Activated T-helper 1 cell treated with anti-CD3 and anti-CD28 coated beads, Interleukin-12 subunit alpha, Interleukin-12 subunit beta, Interleukin-2, Interleukin-4 antibody, amounts not matched to agents 30 ng/mL and 10 ng/mL and 1 ng/mL, durations not matched to agents 14 hours and 24 hours and 36 hours (primary cell): ENCODE measurements at regions of chr19 and their contacts with region 1.

Region 1: DNA sequence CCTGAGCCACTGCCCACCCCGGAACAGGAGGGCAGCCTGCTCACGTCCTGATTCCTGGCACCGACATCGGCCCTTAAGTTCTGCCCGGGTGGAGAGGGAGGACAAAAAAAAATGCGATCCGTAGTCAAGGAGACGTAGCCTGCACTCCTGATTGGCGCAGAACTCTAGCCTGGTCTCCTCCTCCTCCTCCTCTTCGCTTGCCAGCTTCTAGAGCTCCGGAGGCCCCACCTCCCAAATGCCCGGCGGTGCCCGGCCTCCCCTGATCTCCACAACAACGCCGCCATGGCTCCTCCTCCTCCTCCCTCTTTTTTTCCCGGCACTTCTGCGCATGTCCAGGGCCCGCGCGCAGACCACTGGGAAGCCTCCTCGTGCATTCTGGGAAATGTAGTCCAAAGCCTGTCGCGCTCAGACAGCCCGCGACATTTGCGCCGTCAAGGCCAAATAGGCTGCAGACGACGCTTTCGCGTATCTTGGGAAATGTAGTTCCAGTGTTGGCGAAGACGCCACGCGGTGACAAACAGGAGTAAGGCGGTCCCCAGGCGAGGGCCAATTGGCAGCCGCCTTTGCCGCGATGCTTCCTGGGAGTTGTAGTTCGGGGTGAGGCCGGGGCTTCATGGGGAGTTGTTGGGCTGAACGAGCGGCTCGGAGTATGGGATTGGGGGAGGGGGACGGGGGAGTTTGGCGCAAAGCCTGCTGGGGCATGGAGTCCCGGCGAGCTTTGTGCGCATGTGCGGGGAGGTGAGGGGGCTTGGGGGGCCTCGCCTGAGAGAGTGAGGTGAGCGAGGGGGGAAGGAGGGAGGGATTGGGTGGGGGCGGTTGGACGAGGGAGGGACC is at the start of gene ZNF444:
- DNase-seq: peak; percentile 99
- H3K4me3 Mint-ChIP-seq: peak within 1 kb of the TSS; percentile 82
- H3K27ac Mint-ChIP-seq: peak within 1 kb of the TSS; percentile 84
- H3K4me1 Mint-ChIP-seq: peaks cover 37% of the 10 kb centered on the region
- H3K27me3 Mint-ChIP-seq: no peaks in the 10 kb centered on the region
- total RNA-seq, gene ZNF444: 33.8 and 36.5 TPM in 2 replicates

Region 2: GRCh38 chr19:55062734-55063492 is 1077.9 kb before region 1 on chr19 and contains the start of gene RDH13:
- intact Hi-C with region 1: loop called (anchors 5 kb)
- DNase-seq: peak; percentile 96
- H3K4me3 Mint-ChIP-seq: peak within 1 kb of the TSS; percentile 89
- H3K27ac Mint-ChIP-seq: peak within 1 kb of the TSS; percentile 75
- H3K4me1 Mint-ChIP-seq: peaks cover 12% of the 10 kb centered on the region
- H3K27me3 Mint-ChIP-seq: peaks cover 18% of the 10 kb centered on the region
- total RNA-seq, gene RDH13: 21.7 and 26.4 TPM in 2 replicates

Region 3: GRCh38 chr19:55605207-55605636 is 535.6 kb before region 1 on chr19:
- intact Hi-C with region 1: loop called (anchors 1 kb)
- DNase-seq: peak; percentile 98
- H3K4me3 Mint-ChIP-seq: peak overlapping the region; percentile 86
- H3K27ac Mint-ChIP-seq: peak overlapping the region; percentile 95
- H3K4me1 Mint-ChIP-seq: peaks cover 45% of the 10 kb centered on the region
- H3K27me3 Mint-ChIP-seq: no peaks in the 10 kb centered on the region

Region 4: GRCh38 chr19:55674841-55675660 is 465.7 kb before region 1 on chr19 and contains the start of gene EPN1:
- intact Hi-C with region 1: loop called (anchors 1 kb)
- DNase-seq: peak; percentile 94
- H3K4me3 Mint-ChIP-seq: peak within 1 kb of the TSS; percentile 98
- H3K27ac Mint-ChIP-seq: peak within 1 kb of the TSS; percentile 95
- H3K4me1 Mint-ChIP-seq: peaks cover 47% of the 10 kb centered on the region
- H3K27me3 Mint-ChIP-seq: no peaks in the 10 kb centered on the region
- total RNA-seq, gene EPN1: 46.0 and 48.3 TPM in 2 replicates

Region 5: DNA sequence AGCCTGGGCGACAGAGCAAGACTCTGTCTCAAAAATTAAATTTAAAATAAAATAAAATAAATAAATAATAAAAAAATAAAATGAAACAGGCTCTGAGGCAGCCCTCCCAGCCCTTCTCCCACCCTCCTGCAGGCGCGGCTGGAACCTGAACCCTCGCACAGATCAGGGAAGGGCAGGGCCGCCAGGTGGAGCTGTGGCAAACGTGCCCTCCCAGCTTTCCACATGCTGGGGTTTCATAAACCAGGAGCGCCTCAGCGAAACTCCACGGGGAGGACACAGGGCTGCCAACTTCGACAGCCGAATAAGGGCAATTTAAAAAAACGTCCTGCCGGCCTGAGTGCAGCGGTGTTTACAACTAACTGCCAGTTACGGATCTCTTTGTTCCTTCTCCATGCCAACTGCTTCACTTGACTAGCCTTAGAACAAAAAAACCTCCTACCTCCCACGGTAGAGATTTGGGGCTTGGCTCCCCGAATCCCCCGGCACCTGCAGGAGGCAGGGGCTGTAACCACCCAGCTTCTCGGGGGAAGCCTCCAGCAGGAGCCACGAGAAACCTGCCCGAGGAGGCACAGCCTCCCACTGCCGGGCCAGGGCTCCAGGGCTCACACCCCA is 35.6 kb before region 1 on chr19:
- intact Hi-C with region 1: loop called (anchors 1 kb)
- DNase-seq: peak; percentile 28
- H3K4me3 Mint-ChIP-seq: no peak overlapping the region
- H3K27ac Mint-ChIP-seq: no peak overlapping the region
- H3K4me1 Mint-ChIP-seq: peaks cover 6% of the 10 kb centered on the region
- H3K27me3 Mint-ChIP-seq: no peaks in the 10 kb centered on the region

Region 6: GRCh38 chr19:56121180-56122167 is 19.3 kb before region 1 on chr19 and contains the start of gene ZNF787:
- intact Hi-C with region 1: loop called (anchors 1 kb)
- DNase-seq: peak; percentile 97
- H3K4me3 Mint-ChIP-seq: peak within 1 kb of the TSS; percentile 89
- H3K27ac Mint-ChIP-seq: peak within 1 kb of the TSS; percentile 97
- H3K4me1 Mint-ChIP-seq: peaks cover 28% of the 10 kb centered on the region
- H3K27me3 Mint-ChIP-seq: no peaks in the 10 kb centered on the region
- total RNA-seq, gene ZNF787: 41.8 and 42.6 TPM in 2 replicates

Region 7: DNA sequence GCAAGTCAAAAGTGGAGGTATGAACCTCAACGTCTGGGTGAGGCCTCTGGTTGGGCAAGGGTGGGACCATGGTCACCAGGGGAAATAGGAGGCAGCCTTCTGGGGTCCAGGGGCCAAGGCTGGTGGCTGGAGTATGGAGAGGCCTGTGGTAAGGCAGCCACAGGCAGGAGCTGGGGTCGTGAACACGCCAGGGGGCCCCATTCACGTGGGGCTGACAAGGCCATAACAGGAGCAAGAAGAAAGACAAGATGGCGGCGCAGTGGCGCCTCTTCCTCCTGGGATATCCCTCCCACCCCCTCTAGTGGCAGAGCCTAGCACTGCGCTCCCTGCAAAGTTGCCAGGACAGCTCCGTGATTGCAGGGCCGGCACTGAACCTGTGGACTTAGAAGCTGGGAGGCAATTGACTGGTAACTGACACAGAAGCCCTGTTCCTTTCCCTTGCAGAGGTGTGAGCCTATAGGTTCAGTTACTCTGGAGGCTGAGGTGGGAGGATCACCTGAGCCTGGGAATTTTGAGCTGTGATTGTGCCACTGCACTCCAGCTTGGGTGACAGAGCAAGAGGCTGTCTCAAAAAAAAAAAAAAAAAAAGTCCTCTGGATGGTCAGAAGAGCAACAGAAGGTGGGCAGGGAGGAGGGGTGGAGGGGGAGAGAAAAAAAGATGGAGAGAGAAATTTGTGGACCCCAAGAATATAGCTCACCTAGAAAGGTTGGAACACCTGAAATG is 112.1 kb after region 1 on chr19:
- intact Hi-C with region 1: no loop called
- DNase-seq: peak; percentile 45
- H3K4me3 Mint-ChIP-seq: no peak overlapping the region
- H3K27ac Mint-ChIP-seq: no peak overlapping the region
- H3K4me1 Mint-ChIP-seq: no peaks in the 10 kb centered on the region
- H3K27me3 Mint-ChIP-seq: no peaks in the 10 kb centered on the region